Endothelial cell of umbilical vein (primary cell): ENCODE measurements at regions of chr1 and their contacts with region 1.

Region 1: DNA sequence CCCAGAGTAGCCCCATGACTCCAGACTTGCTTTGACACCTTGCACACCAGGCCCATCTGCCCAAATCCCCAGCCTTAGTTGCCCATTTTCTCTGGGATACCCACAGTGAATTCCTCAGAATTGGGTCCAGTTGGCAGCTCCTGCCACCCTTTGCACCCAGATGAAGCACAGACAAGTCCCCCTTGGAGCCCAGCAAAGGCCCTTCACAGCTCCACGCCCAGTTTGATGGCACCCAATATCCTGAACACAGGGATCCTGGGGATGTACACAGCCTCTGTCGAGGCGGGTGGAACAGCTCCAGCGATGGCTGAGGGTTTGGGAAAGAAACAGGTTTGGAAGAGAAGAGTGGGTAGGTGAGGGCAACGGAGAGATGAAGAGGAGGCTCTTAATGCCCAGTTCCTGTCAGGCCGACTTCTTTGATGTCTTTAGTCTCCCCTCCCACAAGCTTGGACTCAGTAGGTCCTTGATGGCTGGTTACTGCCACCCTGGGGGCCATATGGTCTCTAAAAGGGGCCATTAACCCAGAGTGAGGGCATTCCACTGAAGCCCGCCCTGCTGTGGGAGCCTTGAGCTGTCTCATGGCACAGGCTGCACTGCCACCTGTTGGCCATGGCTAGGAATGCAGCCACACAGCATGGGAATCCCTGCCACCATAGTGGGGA is 21.7 kb downstream of the TMEM53 start:
- DNase-seq: peak; percentile 72
- H3K4me3 ChIP-seq: no peak overlapping the region
- H3K27ac ChIP-seq: no peak overlapping the region
- H3K4me1 ChIP-seq: no peaks in the 10 kb centered on the region
- H3K27me3 ChIP-seq: no peaks in the 10 kb centered on the region
- CTCF ChIP-seq: peak; percentile 92 to 94
- POLR2A ChIP-seq: no peak

Region 2: GRCh38 chr1:43706598-43707495 is 945.7 kb before region 1 on chr1:
- CTCF ChIA-PET with region 1: no interaction called
- POLR2A ChIA-PET with region 1: no interaction called
- dilution Hi-C with region 1: no loop called
- intact Hi-C with region 1: no loop called
- DNase-seq: peak; percentile 92
- H3K4me3 ChIP-seq: peak overlapping the region in 2 of 3 experiments; percentile 36 to 56
- H3K27ac ChIP-seq: no peak overlapping the region
- H3K4me1 ChIP-seq: peaks cover 36% of the 10 kb centered on the region
- H3K27me3 ChIP-seq: no peaks in the 10 kb centered on the region
- CTCF ChIP-seq: no peak
- POLR2A ChIP-seq: peak; percentile 93

Region 3: GRCh38 chr1:44609412-44609767 is 43.2 kb before region 1 on chr1:
- CTCF ChIA-PET with region 1: interaction called, 109 read pairs
- POLR2A ChIA-PET with region 1: no interaction called
- dilution Hi-C with region 1: no loop called
- intact Hi-C with region 1: loop called (anchors 1 kb)
- DNase-seq: peak; percentile 18
- H3K4me3 ChIP-seq: no peak overlapping the region
- H3K27ac ChIP-seq: no peak overlapping the region
- H3K4me1 ChIP-seq: no peaks in the 10 kb centered on the region
- H3K27me3 ChIP-seq: peaks cover 6 to 7% of the 10 kb centered on the region in 2 experiments
- CTCF ChIP-seq: peak; percentile 24 to 55
- POLR2A ChIP-seq: no peak

Region 4: GRCh38 chr1:44631647-44632539 is 20.7 kb before region 1 on chr1:
- CTCF ChIA-PET with region 1: interaction called, 32 read pairs
- POLR2A ChIA-PET with region 1: no interaction called
- dilution Hi-C with region 1: no loop called
- intact Hi-C with region 1: no loop called
- DNase-seq: peak; percentile 89
- H3K4me3 ChIP-seq: peak overlapping the region; percentile 55 to 81 (median 78)
- H3K27ac ChIP-seq: peak overlapping the region; percentile 78
- H3K4me1 ChIP-seq: peaks cover 9% of the 10 kb centered on the region
- H3K27me3 ChIP-seq: no peaks in the 10 kb centered on the region
- CTCF ChIP-seq: no peak
- POLR2A ChIP-seq: peak; percentile 91

Region 5: DNA sequence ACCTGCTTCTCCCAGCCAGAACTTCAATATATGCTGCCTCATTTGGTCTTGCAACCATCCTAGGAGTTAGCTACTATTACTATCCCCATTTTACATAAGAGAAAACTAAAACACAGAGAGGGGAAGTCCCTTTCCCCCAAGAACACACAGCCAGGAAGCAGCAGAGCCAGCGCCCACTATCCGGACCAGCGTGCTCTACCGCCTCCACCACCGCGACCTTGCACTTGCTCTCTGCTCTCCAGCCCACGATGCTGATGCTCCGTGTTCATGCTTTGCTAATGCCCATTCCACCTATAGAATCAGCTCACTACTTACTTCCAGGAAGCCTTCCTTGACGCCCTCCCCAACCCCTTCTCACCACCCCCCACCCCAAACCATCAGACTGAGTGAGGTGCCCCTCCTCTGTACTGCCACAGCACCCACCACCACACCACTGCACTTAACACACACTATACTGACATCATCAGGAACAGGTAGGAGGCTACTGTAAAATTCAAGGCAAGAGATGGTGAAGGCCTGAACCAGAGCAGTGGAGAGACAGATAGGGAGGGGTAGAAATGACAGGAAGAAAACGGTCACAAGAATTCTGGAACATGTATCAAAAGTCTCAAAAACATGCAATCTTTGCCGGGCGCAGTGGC is 12.3 kb after region 1 on chr1:
- CTCF ChIA-PET with region 1: interaction called, 18 read pairs
- POLR2A ChIA-PET with region 1: no interaction called
- dilution Hi-C with region 1: no loop called
- intact Hi-C with region 1: no loop called
- DNase-seq: no peak
- H3K4me3 ChIP-seq: no peak overlapping the region
- H3K27ac ChIP-seq: no peak overlapping the region
- H3K4me1 ChIP-seq: no peaks in the 10 kb centered on the region
- H3K27me3 ChIP-seq: no peaks in the 10 kb centered on the region
- CTCF ChIP-seq: no peak
- POLR2A ChIP-seq: no peak